Aorta (tissue), 5 donors: ENCODE measurements at regions of chr10 and their contacts with region 1.

Region 1: GRCh38 chr10:63629363-63630084 is 108.3 kb downstream of the REEP3 start:
- DNase-seq: peak; percentile 97 to 99
- ATAC-seq: peak; percentile 92
- H3K4me3 ChIP-seq: peak overlapping the region; percentile 44 to 66
- H3K27ac ChIP-seq: peak overlapping the region; percentile 99 to 100
- H3K4me1 ChIP-seq: peaks cover 0 to 2% of the 10 kb centered on the region in 2 donors
- H3K27me3 ChIP-seq: no peaks in the 10 kb centered on the region

Region 2: GRCh38 chr10:63166742-63167258 is 462.7 kb before region 1 on chr10:
- intact Hi-C with region 1: loop called (anchors 5 to 10 kb)
- DNase-seq: no peak
- ATAC-seq: peak; percentile 79
- H3K4me3 ChIP-seq: no peak overlapping the region
- H3K27ac ChIP-seq: no peak overlapping the region
- H3K4me1 ChIP-seq: no peaks in the 10 kb centered on the region
- H3K27me3 ChIP-seq: no peaks in the 10 kb centered on the region

Region 3: DNA sequence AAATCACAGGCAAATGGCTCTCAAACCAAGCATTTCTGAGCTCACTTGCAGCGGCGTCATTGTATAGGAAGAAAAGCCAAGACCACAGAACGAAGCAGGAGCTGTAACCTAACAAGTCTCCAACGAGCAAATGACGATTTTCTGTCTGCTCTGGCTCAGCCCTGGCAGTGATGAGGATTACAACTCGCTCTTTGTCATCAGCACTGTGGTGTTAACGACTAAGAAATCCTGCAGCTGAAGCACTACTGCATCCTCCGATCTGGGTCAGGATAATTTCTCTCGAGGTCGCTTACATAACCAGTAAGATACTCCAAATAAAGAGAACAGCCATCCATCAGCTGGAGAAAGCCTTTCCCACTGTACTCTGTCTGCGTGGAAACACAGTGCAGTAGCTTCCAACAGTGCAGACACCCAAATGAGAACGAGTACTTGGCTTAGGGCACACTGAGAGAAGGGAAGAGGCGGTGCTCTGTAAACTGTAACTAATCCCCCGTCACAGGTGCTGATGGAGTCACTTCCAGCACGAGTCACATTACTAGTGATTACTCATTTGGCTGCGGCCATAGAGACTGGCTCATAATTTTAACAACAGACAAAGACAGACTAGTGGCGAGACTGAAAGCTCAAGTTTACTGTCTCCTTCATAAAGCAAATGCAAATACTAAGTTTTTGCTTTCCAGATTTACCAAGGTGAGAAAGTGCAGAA is 360.6 kb before region 1 on chr10:
- intact Hi-C with region 1: loop called in 1 of 2 experiments (anchors 2 kb)
- DNase-seq: peak in 1 of 2 donors; percentile 86
- ATAC-seq: peak; percentile 94
- H3K4me3 ChIP-seq: peak overlapping the region; percentile 71 to 96
- H3K27ac ChIP-seq: peak overlapping the region; percentile 73 to 99
- H3K4me1 ChIP-seq: no peaks in the 10 kb centered on the region
- H3K27me3 ChIP-seq: no peaks in the 10 kb centered on the region

Region 4: DNA sequence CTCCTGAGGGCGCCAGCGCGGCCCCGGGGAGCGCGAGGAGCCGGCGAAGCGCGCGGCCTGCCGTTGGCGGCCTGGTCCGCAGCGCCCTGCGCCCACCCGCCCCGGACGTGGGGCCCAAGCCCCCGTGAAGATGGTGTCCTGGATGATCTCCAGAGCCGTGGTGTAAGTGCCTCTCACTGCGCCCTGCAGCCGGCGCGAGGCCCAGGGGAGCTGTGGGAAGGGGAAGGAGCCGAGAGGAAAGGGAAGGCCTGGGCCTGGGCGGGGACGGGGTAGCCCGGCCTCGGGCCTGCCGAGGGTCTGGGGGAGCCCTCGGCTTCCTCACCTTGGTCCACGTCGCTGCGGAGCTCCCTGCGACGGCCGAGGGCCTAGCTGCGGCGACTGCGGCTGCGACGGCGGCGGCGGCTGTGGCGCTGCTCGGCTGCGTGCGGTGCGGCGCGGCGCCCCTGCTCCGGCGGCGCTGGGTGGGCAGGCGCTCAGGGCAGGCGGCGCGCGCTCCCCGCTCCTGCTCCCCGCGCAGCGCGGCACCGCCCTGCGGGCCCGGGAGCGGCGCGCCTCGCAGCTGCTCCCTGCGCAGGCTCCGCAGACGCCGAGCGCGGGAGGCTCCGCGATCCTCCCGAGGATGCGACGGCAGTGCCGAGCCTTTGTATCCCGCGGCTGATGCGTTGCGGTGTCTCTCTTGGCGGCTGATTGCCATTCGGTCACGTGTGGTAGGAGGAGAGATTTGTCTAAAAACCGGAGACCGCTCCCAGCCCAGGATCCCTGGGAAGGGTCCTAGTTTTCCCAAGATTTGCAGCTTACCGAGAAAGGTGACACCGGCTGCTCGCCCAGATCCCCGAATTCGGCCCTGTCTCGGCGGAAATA is 107.9 kb before region 1 on chr10:
- intact Hi-C with region 1: loop called in 1 of 2 experiments (anchors 1 kb)
- DNase-seq: peak; percentile 79 to 87
- ATAC-seq: peak; percentile 88
- H3K4me3 ChIP-seq: peak overlapping the region; percentile 74 to 97
- H3K27ac ChIP-seq: peak overlapping the region; percentile 79 to 98
- H3K4me1 ChIP-seq: peaks cover 2 to 12% of the 10 kb centered on the region in 2 donors
- H3K27me3 ChIP-seq: no peaks in the 10 kb centered on the region

Region 5: GRCh38 chr10:63573068-63573697 is 56.3 kb before region 1 on chr10:
- intact Hi-C with region 1: no loop called
- DNase-seq: no peak
- ATAC-seq: peak; percentile 45
- H3K4me3 ChIP-seq: no peak overlapping the region
- H3K27ac ChIP-seq: peak overlapping the region in 1 of 2 donors; percentile 28
- H3K4me1 ChIP-seq: peaks cover 4 to 7% of the 10 kb centered on the region in 2 donors
- H3K27me3 ChIP-seq: no peaks in the 10 kb centered on the region

Region 6: DNA sequence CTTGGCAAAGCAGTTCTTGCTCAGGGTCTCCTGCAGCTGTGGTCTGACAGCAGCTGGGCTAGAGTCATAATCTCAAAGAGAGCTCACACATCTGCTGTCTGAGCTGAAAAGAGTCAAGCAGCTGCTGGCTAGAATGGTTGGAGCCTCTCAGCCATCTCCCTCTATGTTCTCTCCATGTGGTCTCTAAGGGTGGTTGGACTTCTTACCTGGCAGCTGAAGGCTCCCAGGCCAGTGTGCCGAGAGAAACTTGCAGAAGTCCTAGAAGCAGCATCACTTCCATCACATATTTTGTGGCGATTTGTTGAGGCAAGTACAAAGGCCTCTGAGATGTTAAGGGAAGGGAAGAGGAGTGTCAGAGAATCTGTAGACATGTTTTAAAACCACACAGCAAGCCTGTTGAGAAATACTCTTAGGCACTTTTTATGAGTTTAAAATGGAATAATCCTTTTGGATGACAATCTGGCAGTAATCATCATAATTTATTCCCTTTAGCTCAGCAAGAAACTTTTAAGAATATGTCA is 15.1 kb before region 1 on chr10:
- intact Hi-C with region 1: no loop called
- DNase-seq: no peak
- ATAC-seq: peak; percentile 26
- H3K4me3 ChIP-seq: no peak overlapping the region
- H3K27ac ChIP-seq: no peak overlapping the region
- H3K4me1 ChIP-seq: peaks cover 0 to 2% of the 10 kb centered on the region in 2 donors
- H3K27me3 ChIP-seq: no peaks in the 10 kb centered on the region

Region 7: GRCh38 chr10:63699785-63700184 is 70.3 kb after region 1 on chr10:
- intact Hi-C with region 1: loop called (anchors 5 kb)
- DNase-seq: peak in 1 of 2 donors; percentile 65
- ATAC-seq: peak; percentile 43
- H3K4me3 ChIP-seq: no peak overlapping the region
- H3K27ac ChIP-seq: no peak overlapping the region
- H3K4me1 ChIP-seq: peaks cover 0 to 3% of the 10 kb centered on the region in 2 donors
- H3K27me3 ChIP-seq: no peaks in the 10 kb centered on the region

Region 8: DNA sequence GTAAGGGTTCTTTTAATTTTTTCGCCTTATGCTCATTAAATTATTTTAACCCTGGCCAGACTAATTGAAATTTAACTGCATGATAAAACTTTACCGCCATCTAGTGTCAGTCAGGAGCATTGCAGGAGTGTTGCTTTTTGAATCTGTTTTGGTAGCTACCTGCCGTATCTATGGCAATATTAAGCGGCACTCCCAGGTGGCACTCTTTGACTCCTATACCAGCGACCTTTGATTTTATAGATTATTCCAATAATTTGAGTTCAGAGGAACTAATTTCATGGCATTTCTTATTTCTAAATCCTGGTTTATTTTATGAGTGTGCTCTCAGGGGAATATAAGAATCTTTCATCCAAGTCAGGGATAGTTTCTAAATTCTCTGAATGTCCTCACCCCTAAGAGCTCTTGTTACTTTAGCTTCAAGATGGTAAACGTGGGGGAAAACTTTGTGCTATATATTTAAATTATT is 90.6 kb after region 1 on chr10:
- intact Hi-C with region 1: loop called in 1 of 2 experiments (anchors 2 kb)
- DNase-seq: no peak
- ATAC-seq: peak; percentile 54
- H3K4me3 ChIP-seq: no peak overlapping the region
- H3K27ac ChIP-seq: no peak overlapping the region
- H3K4me1 ChIP-seq: peaks cover 0 to 1% of the 10 kb centered on the region in 2 donors
- H3K27me3 ChIP-seq: no peaks in the 10 kb centered on the region

Region 9: GRCh38 chr10:64408391-64409183 is 779.1 kb after region 1 on chr10:
- intact Hi-C with region 1: no loop called
- DNase-seq: no peak
- ATAC-seq: no peak
- H3K4me3 ChIP-seq: no peak overlapping the region
- H3K27ac ChIP-seq: no peak overlapping the region
- H3K4me1 ChIP-seq: no peaks in the 10 kb centered on the region
- H3K27me3 ChIP-seq: no peaks in the 10 kb centered on the region